Activated naive CD8-positive, alpha-beta T cell treated with anti-CD3 and anti-CD28 coated beads, Interleukin-2, amount 10 ng/mL, durations not matched to agents 7 days and 5 days (primary cell): ENCODE measurements at regions of chr17 and their contacts with region 1.

Region 1: DNA sequence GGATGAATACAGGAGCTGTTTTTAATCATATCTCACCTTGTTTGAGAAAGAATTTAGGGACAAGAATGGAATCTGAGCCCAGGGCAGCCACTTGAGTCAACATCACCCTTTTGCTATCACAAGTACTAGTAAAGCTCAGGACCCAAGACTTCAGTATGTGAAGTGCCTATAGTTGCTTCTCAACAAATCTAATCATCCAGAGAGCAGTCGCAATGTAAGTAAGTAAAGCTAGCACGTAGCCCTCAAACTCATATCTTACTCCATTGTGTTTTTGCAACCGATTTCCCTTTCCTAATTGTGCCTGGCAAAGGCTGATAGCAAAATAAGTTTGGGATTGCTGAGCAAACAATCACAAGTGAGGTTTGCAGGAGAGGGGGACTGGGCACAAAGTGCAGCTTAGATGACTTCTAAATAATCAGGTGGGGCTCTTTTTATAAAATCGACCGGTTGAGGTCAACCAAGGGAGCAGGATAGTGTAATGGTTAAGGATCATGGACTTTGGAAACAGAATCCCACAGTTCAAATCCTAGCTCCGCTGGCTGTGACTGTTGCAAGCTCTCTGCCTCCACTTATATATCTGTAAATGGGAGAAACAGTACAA is 13.0 kb downstream of the TOB1 start:
- DNase-seq: no peak
- ATAC-seq: no peak
- H3K4me3 Mint-ChIP-seq: no peak overlapping the region
- H3K27ac Mint-ChIP-seq: peak overlapping the region; percentile 87
- H3K4me1 Mint-ChIP-seq: peaks cover 12% of the 10 kb centered on the region
- H3K27me3 Mint-ChIP-seq: peaks cover 9% of the 10 kb centered on the region

Region 2: GRCh38 chr17:50944054-50944901 is 91.2 kb after region 1 on chr17:
- POLR2A ChIA-PET with region 1: interaction called, 22 read pairs
- DNase-seq: peak; percentile 84
- ATAC-seq: peak; percentile 91
- H3K4me3 Mint-ChIP-seq: peak overlapping the region; percentile 70
- H3K27ac Mint-ChIP-seq: peak overlapping the region; percentile 70
- H3K4me1 Mint-ChIP-seq: peaks cover 23% of the 10 kb centered on the region
- H3K27me3 Mint-ChIP-seq: no peaks in the 10 kb centered on the region

Region 3: GRCh38 chr17:50949989-50950881 is 97.1 kb after region 1 on chr17:
- POLR2A ChIA-PET with region 1: interaction called, 22 read pairs
- DNase-seq: peak; percentile 72
- ATAC-seq: peak; percentile 86
- H3K4me3 Mint-ChIP-seq: no peak overlapping the region
- H3K27ac Mint-ChIP-seq: peak overlapping the region; percentile 38
- H3K4me1 Mint-ChIP-seq: peaks cover 22% of the 10 kb centered on the region
- H3K27me3 Mint-ChIP-seq: peaks cover 4% of the 10 kb centered on the region